Activated CD4-positive, alpha-beta T cell treated with anti-CD3 and anti-CD28 coated beads, Interleukin-2, amount 10 ng/mL, durations not matched to agents 24 days and 14 days (primary cell): ENCODE measurements at regions of chr19 and their contacts with region 1.

Region 1: DNA sequence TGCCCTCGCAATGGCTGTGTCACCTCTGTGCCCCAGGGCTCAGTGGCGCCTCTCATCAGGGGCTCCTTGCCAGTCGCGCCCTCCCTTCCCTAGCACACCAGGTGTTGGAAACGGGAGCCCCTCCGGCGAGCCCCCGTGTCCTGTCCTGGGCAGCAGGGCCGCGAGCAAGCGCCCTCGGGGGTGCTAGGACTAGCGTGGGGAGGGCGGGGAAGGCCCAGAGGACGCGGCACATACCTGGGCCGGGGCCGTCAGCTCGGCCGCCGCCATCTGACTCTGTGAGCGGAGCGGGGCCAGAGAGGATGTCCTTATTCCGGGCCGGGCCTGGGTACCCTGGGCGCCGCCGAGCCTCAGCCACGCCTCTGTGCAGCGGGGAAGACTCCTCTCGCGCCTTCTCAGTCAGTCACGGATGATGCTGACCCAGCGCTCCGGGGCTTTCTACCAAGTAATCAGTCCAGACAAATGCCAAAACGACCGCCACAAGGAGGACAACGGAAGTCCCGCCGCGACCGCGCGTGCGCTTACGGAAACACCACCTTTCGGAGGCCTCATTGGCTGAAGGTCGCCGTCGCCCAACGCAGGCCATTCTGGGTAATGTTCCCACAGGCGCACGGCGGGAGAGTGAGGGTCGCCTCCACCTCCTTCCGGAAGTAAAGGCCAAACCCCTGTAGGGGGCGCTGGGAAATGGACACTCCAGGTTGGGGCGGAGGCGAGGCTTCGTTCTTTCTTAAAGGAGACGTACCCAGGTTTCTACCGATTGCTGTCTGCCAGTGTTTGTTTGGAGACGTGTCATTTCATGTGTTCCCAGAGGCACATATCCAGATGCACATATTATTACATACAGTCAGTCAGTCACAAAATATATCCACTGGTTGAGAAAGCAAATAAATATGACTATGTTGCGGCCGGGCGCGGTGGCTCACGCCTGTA is at the start of gene ZNF256:
- DNase-seq: peak; percentile 94
- H3K4me3 Mint-ChIP-seq: peak within 1 kb of the TSS; percentile 96
- H3K27ac Mint-ChIP-seq: peak within 1 kb of the TSS; percentile 90
- H3K4me1 Mint-ChIP-seq: peaks cover 11% of the 10 kb centered on the region
- H3K27me3 Mint-ChIP-seq: no peaks in the 10 kb centered on the region
- total RNA-seq, gene ZNF256: 3.2 and 3.9 TPM in 2 replicates

Region 2: DNA sequence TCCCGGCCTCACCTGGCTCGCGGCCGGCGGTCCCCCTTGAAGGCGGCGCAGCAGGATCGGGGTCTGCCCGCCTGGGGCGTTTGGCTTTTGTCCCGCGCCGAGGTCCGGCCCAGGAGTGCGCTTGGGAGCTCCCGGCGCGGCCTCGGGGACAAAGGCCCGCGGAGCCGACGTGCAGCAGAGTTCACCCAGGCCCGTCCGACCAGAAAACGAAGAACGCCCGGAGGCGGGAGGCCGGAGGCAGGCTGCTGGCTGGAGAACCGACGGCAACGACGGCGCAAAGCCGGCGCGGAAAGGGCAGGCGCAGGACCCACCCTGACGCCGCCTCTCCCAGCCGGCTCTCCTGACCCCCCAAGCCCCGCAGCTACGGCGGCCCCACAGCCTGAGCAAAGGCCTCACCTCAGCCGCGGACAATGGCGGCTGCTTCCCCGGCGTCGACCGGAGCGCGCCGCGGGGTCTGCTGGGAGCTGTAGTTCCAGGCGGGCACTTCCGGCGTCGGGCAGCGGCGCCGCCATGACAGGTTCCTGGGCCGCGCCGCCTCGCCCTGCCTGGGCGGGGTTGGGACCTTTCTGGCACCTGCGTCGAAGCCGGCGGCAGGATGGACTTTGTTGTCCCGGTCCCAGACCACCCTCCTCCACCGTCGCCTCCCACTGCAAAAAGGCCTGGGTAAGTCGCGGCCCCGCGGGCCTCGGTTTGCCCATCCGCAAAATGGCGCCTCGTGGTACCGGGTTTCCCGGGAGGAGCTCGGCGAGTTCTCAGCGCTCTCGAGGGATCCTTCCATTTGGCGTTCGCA is 55.1 kb after region 1 on chr19 and contains the start of gene ZNF606:
- intact Hi-C with region 1: loop called (anchors 2 kb)
- DNase-seq: peak; percentile 95
- H3K4me3 Mint-ChIP-seq: peak within 1 kb of the TSS; percentile 84
- H3K27ac Mint-ChIP-seq: peak within 1 kb of the TSS; percentile 88
- H3K4me1 Mint-ChIP-seq: peaks cover 11% of the 10 kb centered on the region
- H3K27me3 Mint-ChIP-seq: no peaks in the 10 kb centered on the region
- total RNA-seq, gene ZNF606: 6.6 and 7.0 TPM in 2 replicates